ENCODE measurements at regions of chr7 and their contacts with region 1.

Region 1: GRCh38 chr7:51706851-51707250 is 390.2 kb upstream of the COBL start:
- DNase-seq: no peak
- H3K4me3 ChIP-seq: no peak overlapping the region
- H3K27ac ChIP-seq: no peak overlapping the region
- H3K4me1 ChIP-seq: no peaks in the 10 kb centered on the region
- H3K27me3 ChIP-seq: no peaks in the 10 kb centered on the region
- CTCF ChIP-seq: no peak

Region 2: GRCh38 chr7:51658684-51659083 is 48.2 kb before region 1 on chr7:
- CTCF ChIA-PET with region 1: no interaction called
- POLR2A ChIA-PET with region 1: no interaction called
- intact Hi-C with region 1: loop called (anchors 10 kb)
- DNase-seq: no peak
- H3K4me3 ChIP-seq: no peak overlapping the region
- H3K27ac ChIP-seq: no peak overlapping the region
- H3K4me1 ChIP-seq: no peaks in the 10 kb centered on the region
- H3K27me3 ChIP-seq: no peaks in the 10 kb centered on the region
- CTCF ChIP-seq: no peak

Region 3: DNA sequence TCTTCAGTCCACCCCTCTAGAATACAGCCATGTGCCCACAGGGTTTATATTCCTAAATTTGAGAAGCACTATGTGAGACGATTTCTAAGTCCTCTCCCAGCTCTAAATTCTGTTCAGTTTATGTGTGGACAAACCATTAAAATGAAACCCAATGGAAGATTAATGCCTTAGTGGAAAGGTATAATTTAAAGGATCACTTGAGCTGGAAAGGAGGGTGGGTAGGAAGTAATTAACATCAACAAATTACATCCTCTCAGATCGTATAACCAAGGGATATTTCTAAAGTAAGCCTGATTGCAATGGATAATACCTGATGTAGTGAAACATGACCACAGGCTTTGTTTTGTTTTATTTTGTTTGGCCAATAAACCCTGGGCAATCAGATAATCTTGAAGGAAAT is 120.8 kb after region 1 on chr7:
- CTCF ChIA-PET with region 1: no interaction called
- POLR2A ChIA-PET with region 1: no interaction called
- intact Hi-C with region 1: no loop called
- DNase-seq: no peak
- H3K4me3 ChIP-seq: no peak overlapping the region
- H3K27ac ChIP-seq: no peak overlapping the region
- H3K4me1 ChIP-seq: no peaks in the 10 kb centered on the region
- H3K27me3 ChIP-seq: no peaks in the 10 kb centered on the region
- CTCF ChIP-seq: no peak

Region 4: DNA sequence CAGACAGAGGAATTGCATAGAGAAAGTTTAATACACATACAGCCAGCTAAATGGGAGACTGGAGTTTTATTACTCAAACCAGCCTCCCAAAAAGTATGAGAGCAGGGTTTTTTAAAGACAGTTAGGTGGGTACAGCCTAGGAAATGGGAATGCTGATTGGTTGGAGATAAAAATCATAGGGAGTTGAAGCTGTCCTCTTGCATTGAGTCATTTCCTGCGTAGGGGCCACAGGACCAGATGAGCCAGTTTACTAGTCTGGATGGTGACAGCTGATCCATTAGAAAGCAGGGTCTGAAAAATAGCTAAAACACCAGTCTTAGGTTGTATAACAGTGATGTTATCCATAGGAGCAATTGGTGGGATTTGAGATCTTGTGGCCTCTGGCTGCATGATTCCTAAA is 1252.5 kb after region 1 on chr7:
- CTCF ChIA-PET with region 1: no interaction called
- POLR2A ChIA-PET with region 1: no interaction called
- intact Hi-C with region 1: no loop called
- DNase-seq: no peak
- H3K4me3 ChIP-seq: no peak overlapping the region
- H3K27ac ChIP-seq: no peak overlapping the region
- H3K4me1 ChIP-seq: no peaks in the 10 kb centered on the region
- H3K27me3 ChIP-seq: no peaks in the 10 kb centered on the region
- CTCF ChIP-seq: no peak

Measured in A673 (cell line).